Heart right ventricle (tissue), 16 donors: ENCODE measurements at regions of chr17 and their contacts with region 1.

Region 1: DNA sequence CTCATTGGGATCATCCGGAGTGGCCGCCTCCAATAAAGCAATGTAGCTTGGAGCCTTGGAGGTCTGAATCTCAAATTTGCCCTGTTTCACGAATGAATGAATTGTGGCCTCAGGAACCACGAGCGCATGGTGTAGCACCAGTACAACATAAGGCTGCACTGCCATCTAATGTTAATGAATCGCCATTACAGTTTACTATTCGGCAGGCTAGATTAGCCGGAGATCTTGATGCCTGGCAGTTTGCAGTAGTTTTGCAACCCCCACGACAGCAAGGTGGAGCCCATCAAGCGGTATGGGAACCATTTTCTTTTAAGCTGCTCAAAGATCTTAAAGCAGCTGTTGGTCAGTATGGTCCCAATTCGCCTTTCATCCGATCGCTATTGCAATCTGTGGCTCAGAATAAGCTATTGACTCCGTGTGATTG is 18.8 kb downstream of the ALOX15B start:
- DNase-seq: no peak
- ATAC-seq: peak; percentile 77 to 91 (median 84)
- H3K4me3 ChIP-seq: no peak overlapping the region
- H3K27ac ChIP-seq: no peak overlapping the region
- H3K4me1 ChIP-seq: peaks cover 0 to 40% (median 5%) of the 10 kb centered on the region in 9 donors
- H3K27me3 ChIP-seq: peaks cover 7 to 69% (median 56%) of the 10 kb centered on the region in 7 donors
- CTCF ChIP-seq: peak; percentile 56 to 82 (median 76)

Region 2: DNA sequence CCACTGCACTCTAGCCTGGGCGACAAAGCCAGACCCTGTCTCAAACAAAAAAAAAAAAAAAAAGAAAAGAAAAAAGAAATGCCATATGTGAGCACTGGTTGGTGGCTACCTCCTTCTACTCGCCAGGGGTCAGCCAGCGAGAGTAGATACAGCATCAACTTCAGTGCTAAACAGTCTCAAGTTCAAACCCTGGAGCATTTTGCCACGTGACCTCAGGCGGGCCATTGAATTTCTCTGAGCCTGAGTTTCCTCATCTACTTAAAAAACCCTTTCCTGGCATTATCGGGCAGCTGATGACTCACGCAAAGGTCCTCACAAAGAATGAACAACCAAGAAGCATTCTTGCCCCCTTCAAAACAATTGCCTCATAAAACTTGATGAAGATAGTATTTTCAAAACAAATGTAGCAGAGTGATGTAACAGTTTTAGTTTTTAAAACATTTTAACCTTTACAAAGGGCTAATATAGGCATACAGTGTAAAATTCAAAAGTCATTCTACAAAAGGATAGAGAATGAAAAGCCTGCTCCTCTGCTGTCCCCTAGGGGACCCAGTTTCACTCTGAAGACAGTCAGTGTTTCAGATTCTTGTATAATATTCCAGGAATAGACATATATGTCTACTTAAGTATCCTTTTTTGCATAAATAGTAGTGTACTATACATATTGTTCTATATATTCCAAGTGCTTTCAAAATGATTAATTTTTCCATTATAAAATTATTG is 311.8 kb before region 1 on chr17:
- intact Hi-C with region 1: loop called in 3 of 10 experiments (anchors 5 to 10 kb)
- DNase-seq: no peak
- ATAC-seq: peak in 1 of 8 donors; percentile 37
- H3K4me3 ChIP-seq: no peak overlapping the region
- H3K27ac ChIP-seq: no peak overlapping the region
- H3K4me1 ChIP-seq: peaks cover 0 to 18% (median 8%) of the 10 kb centered on the region in 9 donors
- H3K27me3 ChIP-seq: peaks cover 0 to 18% (median 9%) of the 10 kb centered on the region in 7 donors
- CTCF ChIP-seq: peak in 1 of 9 donors; percentile 8

Region 3: DNA sequence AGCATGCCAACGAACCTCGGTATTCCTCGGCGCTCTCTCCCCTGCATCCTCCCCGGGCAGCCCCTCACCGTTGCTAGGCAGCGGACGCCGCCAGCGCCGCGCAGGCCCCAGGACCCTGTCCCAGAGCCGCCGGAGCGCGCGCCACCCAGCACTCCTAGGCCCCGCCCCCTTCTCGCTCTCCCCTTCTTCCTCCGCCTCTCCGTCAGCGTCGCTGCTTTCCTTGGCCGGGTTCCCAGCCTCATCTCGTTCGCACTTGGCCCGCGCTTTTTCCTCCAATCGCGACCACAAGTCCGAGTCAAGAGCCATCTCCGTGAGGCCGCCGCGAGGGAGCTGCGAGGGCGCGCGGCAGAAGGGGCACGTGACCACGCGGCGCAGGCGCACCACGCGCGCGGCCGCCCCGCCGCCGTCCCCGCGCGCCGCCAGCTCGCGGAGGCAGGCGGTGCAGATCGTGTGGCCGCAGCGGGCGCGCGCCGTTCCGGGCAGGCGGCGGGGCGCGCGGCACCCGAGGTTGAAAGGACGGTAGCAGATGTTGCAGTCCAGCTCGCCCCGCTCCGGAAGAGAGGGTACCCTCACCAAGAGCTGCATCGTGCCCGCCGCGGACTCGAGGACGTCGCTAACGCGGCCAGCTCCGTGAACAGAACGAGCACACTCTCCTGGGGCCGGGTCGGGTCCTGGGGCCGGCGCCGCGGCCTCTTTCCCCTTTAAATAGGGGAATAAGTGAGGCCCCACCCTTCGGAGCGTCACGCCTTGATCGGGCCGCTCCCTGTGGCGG is 141.9 kb before region 1 on chr17 and contains the start of gene RNF227:
- intact Hi-C with region 1: loop called in 2 of 10 experiments (anchors 5 kb)
- DNase-seq: peak; percentile 91 to 94
- ATAC-seq: peak; percentile 88 to 93 (median 91)
- H3K4me3 ChIP-seq: peak within 1 kb of the TSS; percentile 49 to 93 (median 65)
- H3K27ac ChIP-seq: peak within 1 kb of the TSS; percentile 70 to 98 (median 92)
- H3K4me1 ChIP-seq: peaks cover 3 to 35% (median 26%) of the 10 kb centered on the region in 9 donors
- H3K27me3 ChIP-seq: no peaks in the 10 kb centered on the region
- CTCF ChIP-seq: no peak
- total RNA-seq, gene RNF227: 0.15 to 1.6 (median 0.90) TPM

Region 4: GRCh38 chr17:7997186-7997585 is 60.5 kb before region 1 on chr17:
- intact Hi-C with region 1: loop called in 2 of 10 experiments (anchors 5 kb)
- DNase-seq: peak; percentile 25 to 62
- ATAC-seq: peak; percentile 61 to 96 (median 90)
- H3K4me3 ChIP-seq: no peak overlapping the region
- H3K27ac ChIP-seq: peak overlapping the region in 8 of 10 donors; percentile 9 to 74 (median 50)
- H3K4me1 ChIP-seq: peaks cover 0 to 17% (median 7%) of the 10 kb centered on the region in 9 donors
- H3K27me3 ChIP-seq: peaks cover 4 to 36% (median 23%) of the 10 kb centered on the region in 7 donors
- CTCF ChIP-seq: peak in 8 of 9 donors; percentile 15 to 69 (median 42)

Region 5: GRCh38 chr17:8109661-8110464 is 52.2 kb after region 1 on chr17:
- intact Hi-C with region 1: loop called in 1 of 10 experiments (anchors 5 kb)
- DNase-seq: peak in 1 of 2 donors; percentile 59
- ATAC-seq: peak; percentile 57 to 74 (median 66)
- H3K4me3 ChIP-seq: peak overlapping the region in 6 of 10 donors; percentile 2 to 37 (median 20)
- H3K27ac ChIP-seq: no peak overlapping the region
- H3K4me1 ChIP-seq: peaks cover 0 to 14% (median 7%) of the 10 kb centered on the region in 9 donors
- H3K27me3 ChIP-seq: peaks cover 10 to 67% (median 59%) of the 10 kb centered on the region in 7 donors
- CTCF ChIP-seq: peak; percentile 42 to 91 (median 78)

Region 6: DNA sequence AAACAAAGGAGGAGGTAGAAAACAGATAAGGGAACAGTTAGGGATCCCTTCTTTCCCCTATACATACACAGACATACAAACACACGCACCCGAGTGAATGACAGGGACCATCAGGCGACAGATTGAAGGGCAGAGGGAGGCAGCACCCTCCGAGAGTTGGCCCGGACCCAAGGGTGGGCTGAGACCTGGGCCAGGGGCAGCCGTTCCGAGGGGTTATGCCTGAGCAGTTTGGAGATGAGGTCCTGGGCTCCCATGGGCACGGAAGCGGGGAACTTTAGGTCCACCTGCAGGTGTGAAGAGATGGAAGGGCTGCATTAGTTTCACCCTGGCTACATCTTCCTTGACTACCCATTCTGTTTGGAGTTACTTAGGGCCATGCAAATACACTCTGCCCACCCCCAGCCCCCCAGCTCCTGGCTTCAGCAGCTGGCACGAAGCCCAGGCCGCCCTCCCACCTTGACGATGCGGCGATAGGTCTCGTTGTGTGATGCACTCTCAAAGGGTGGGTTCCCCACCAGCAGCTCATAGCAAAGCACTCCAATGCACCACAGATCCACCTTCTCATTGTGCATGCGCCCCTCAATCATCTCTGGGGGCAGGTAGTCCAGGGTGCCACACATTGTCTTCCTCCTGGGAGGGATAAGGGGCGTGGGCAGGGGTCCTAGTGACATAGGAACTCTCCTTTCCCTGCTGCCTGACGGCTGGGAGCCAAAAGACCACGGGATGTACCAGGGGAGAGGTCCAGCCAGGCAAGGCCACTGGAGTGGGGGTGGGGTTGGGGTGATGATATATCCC is 147.3 kb after region 1 on chr17:
- intact Hi-C with region 1: no loop called
- DNase-seq: no peak
- ATAC-seq: no peak
- H3K4me3 ChIP-seq: no peak overlapping the region
- H3K27ac ChIP-seq: no peak overlapping the region
- H3K4me1 ChIP-seq: peaks cover under 1 to 14% (median 3%) of the 10 kb centered on the region in 9 donors
- H3K27me3 ChIP-seq: no peaks in the 10 kb centered on the region
- CTCF ChIP-seq: no peak